ENCODE measurements at regions of chr5 and their contacts with region 1.

Region 1: GRCh38 chr5:156934450-156935211 is 28.4 kb downstream of the TIMD4 start:
- DNase-seq: peak; percentile 76
- H3K4me3 Mint-ChIP-seq: no peak overlapping the region
- H3K27ac Mint-ChIP-seq: peak overlapping the region; percentile 74
- H3K4me1 Mint-ChIP-seq: peaks cover 50% of the 10 kb centered on the region
- H3K27me3 Mint-ChIP-seq: no peaks in the 10 kb centered on the region

Region 2: DNA sequence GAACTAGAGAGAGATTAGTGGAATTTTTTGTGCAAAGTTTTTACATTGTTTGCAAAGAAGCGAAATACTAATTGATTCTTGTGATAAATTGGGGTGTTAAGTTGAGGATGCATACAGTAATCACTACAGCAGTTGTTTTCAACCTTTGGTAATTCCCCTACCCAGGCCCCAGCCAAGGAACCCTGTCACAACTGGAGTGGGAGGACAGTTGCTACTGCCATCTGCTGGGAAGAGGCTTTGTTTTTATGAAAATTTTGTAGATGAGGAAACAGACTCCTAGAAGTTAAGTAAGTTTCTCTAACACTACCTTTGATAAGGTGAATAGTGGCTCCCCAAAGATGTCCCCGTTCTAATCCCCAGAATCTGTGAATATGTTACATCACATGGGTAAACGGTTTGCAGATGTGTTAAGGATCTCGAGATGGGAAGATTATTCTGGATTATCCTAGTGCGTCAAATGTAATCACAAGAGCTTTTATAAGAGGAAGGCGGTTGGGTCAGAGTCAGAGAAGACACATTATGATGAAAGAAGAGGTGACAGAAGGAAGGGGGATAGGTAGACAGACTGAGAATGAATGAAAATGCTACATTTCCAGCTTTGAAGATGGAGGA is 118.5 kb before region 1 on chr5:
- CTCF ChIA-PET with region 1: no interaction called
- POLR2A ChIA-PET with region 1: no interaction called
- DNase-seq: peak; percentile 23
- H3K4me3 Mint-ChIP-seq: no peak overlapping the region
- H3K27ac Mint-ChIP-seq: no peak overlapping the region
- H3K4me1 Mint-ChIP-seq: no peaks in the 10 kb centered on the region
- H3K27me3 Mint-ChIP-seq: peaks cover 7% of the 10 kb centered on the region

Region 3: DNA sequence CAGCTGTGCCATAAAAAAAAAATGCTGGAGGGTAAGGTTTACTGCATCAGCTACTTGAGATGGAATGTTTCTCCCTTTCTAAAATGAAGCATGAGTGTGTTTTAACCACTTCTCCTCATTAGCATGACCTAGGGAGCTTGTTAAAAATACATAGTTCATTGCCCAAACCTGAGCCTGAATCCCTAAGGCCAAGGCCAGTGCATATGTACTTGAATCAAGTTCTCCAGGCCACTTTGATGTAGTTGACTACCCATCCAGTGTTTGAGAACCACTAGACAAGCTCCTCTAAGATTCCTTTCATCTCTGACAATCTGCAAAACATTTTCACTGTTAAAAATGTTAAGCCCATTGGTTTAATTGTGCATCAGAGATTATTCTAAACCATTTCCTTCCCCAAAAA is 21.7 kb after region 1 on chr5:
- CTCF ChIA-PET with region 1: no interaction called
- POLR2A ChIA-PET with region 1: interaction called, 11 read pairs
- DNase-seq: no peak
- H3K4me3 Mint-ChIP-seq: no peak overlapping the region
- H3K27ac Mint-ChIP-seq: no peak overlapping the region
- H3K4me1 Mint-ChIP-seq: peaks cover 11% of the 10 kb centered on the region
- H3K27me3 Mint-ChIP-seq: no peaks in the 10 kb centered on the region